Sigmoid colon (tissue), 7 donors: ENCODE measurements at regions of chrX and their contacts with region 1.

Region 1: GRCh38 chrX:13653022-13653693 is at the start of gene TCEANC:
- DNase-seq: peak; percentile 99
- H3K4me3 ChIP-seq: peak within 1 kb of the TSS; percentile 54 to 66 (median 62)
- H3K27ac ChIP-seq: peak within 1 kb of the TSS; percentile 90 to 96 (median 94)
- H3K4me1 ChIP-seq: peaks cover 0 to 20% (median 9%) of the 10 kb centered on the region in 4 donors
- H3K27me3 ChIP-seq: no peaks in the 10 kb centered on the region
- CTCF ChIP-seq: no peak
- EP300 ChIP-seq: no peak
- POLR2A ChIP-seq: peak; percentile 46 to 58
- total RNA-seq, gene TCEANC: 2.6 to 8.7 (median 6.2) TPM

Region 2: GRCh38 chrX:12791257-12792228 is 861.6 kb before region 1 on chrX and contains the start of gene PRPS2:
- intact Hi-C with region 1: loop called (anchors 10 kb)
- DNase-seq: peak; percentile 83
- H3K4me3 ChIP-seq: peak within 1 kb of the TSS; percentile 63 to 71 (median 68)
- H3K27ac ChIP-seq: peak within 1 kb of the TSS; percentile 42 to 86 (median 76)
- H3K4me1 ChIP-seq: peaks cover 0 to 18% (median 0%) of the 10 kb centered on the region in 4 donors
- H3K27me3 ChIP-seq: no peaks in the 10 kb centered on the region
- CTCF ChIP-seq: no peak
- EP300 ChIP-seq: no peak
- POLR2A ChIP-seq: peak in 1 of 2 donors; percentile 19
- total RNA-seq, gene PRPS2: 53.7 to 99.9 (median 66.9) TPM

Region 3: DNA sequence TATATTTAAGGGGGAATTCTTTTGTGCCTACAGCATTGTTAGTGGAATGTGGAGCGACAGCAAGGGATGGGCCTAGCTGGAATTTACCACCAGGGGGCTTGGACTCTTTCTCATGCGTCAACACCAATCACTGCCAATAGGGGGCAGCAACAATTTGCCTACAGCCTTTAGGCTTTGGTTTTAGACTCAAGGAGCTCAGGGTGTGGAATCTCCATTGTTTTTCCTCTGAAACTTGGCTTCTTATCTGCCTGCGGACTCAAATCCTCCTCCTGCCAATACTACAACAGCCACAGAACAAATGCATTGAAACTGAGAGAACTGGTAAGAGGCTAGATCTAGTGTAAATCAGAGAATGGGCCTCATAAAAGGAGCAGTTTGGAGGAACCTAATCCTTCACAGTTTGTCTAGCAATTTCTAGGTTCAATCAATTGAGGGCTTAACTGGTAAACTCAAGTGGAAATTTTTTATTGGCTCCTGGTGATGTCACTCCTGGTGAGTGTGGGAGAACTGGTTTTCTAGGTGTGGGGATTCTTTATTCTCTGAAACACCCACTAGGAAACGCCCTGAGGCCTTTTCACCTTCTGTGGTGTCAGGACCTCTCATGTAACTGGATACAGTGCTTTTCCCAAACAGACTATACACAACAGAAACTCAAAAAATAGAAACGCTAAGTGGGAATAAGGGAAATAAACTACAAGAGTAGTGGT is 706.2 kb before region 1 on chrX:
- intact Hi-C with region 1: loop called (anchors 10 kb)
- DNase-seq: peak; percentile 83
- H3K4me3 ChIP-seq: no peak overlapping the region
- H3K27ac ChIP-seq: peak overlapping the region in 2 of 4 donors; percentile 22 to 45
- H3K4me1 ChIP-seq: peaks cover 0 to 14% (median 2%) of the 10 kb centered on the region in 4 donors
- H3K27me3 ChIP-seq: no peaks in the 10 kb centered on the region
- CTCF ChIP-seq: peak; percentile 53 to 90 (median 65)
- EP300 ChIP-seq: no peak
- POLR2A ChIP-seq: no peak

Region 4: DNA sequence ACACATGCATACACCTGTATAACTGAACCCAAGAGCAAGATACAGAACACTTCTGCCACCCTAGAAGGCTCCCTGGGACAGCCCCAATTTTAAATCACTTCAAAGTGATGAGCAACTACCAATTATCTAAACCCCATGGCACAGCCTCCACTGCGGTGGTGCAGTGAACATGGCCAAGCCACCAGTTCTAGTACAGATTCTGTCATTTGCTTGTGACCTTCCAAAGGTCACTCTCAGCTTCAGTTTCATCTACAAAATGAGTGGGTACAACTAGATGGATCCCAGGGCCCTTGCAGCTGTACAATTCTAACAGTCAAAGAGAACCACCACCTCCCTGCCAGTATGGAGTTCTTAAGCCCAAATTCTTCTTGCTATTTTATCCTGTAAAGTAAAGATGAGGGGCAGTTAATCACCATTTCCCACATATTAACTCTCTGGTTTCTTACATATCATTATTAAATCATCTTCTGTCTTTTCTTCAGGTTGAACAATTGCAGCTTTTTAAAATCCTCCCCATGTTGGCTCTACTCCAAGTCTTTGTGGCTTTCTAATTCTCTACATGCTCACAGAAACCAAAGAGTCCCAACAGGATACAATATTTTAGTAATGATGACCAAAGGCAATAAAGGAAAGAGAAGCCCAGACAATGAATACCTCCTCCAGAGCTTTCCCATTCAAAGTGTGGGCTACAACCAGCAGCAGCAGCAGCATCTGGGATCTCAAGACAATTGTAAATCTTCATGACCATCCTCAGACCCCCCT is 202.7 kb after region 1 on chrX:
- intact Hi-C with region 1: no loop called
- DNase-seq: no peak
- H3K4me3 ChIP-seq: no peak overlapping the region
- H3K27ac ChIP-seq: no peak overlapping the region
- H3K4me1 ChIP-seq: no peaks in the 10 kb centered on the region
- H3K27me3 ChIP-seq: no peaks in the 10 kb centered on the region
- CTCF ChIP-seq: no peak
- EP300 ChIP-seq: no peak
- POLR2A ChIP-seq: no peak